Posterior vena cava (tissue), 2 donors: ENCODE measurements at regions of chr6 and their contacts with region 1.

Region 1: DNA sequence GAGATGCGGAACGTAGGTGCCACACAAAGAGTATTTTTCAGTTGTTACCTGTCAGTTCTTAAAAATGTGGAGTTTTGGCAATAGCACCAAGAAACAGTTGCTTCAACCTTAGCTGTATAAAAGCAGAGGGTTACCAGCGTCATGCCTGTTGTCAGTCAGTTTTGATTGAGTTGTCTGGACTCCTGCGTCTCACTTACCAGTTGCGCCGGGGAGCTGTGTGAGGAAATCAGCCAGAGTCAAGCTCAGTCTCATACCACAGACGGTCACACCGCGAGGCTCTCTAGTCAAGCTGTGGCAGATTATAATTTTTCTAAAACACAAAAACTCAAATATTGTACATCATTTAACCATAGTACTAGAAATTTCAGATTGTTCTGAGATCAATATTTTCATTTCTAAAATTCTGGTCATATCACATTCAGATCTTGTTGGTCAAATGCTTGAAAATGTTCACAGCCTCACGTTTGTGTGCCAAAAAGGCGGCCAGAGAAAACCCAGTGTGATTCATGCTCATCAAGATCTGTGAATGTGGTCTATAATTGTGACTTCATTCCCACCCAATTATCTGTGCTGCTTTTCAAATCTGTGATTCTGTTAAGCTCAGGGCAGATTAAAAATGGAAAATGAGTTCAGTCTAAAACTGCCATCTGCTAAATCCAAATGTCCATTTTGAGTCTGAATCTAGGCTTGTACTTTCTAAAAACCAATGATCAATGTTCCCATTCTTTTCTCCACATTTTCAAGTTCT is 37.5 kb downstream of the SASH1 start:
- DNase-seq: no peak

Region 2: GRCh38 chr6:148192310-148192709 is 187.8 kb before region 1 on chr6:
- intact Hi-C with region 1: no loop called
- DNase-seq: no peak

Region 3: GRCh38 chr6:148451690-148452089 is 71.5 kb after region 1 on chr6:
- intact Hi-C with region 1: loop called in 1 of 2 experiments (anchors 10 kb)
- DNase-seq: no peak